Head of caudate nucleus (tissue), 42 donors: ENCODE measurements at regions of chr12 and their contacts with region 1.

Region 1: GRCh38 chr12:82527165-82527780 is 159.4 kb upstream of the TMTC2 start:
- DNase-seq: peak in 38 of 42 donors; percentile 5 to 89 (median 62)

Region 2: GRCh38 chr12:82426081-82426480 is 101.2 kb before region 1 on chr12:
- intact Hi-C with region 1: no loop called
- DNase-seq: no peak

Region 3: GRCh38 chr12:82627569-82628198 is 100.4 kb after region 1 on chr12:
- intact Hi-C with region 1: loop called (anchors 5 kb)
- DNase-seq: peak in 13 of 42 donors; percentile 5 to 66 (median 22)

Region 4: DNA sequence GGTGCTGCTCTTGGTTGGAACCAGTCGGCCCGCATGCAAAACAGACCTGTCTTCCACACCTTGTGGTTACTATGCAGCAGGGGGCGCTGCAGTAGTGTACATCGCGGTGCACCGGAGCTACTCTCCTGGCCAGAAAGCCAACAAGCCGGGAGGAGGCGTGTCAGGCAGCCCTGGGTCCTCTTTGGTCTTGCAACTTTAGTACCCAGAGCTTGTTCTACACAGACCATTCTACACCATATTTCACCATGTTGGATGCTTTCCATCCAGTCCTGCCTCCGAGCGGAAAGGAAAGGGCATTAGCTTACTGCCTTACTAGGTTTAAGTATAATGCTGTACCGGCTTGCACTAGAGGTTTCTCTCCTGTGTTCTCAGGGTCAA is 158.5 kb after region 1 on chr12:
- intact Hi-C with region 1: loop called (anchors 5 kb)
- DNase-seq: peak; percentile 94 to 99 (median 97)